Cardiac septum (tissue), 1 donor: ENCODE measurements at regions of chr18 and their contacts with region 1.

Region 1: DNA sequence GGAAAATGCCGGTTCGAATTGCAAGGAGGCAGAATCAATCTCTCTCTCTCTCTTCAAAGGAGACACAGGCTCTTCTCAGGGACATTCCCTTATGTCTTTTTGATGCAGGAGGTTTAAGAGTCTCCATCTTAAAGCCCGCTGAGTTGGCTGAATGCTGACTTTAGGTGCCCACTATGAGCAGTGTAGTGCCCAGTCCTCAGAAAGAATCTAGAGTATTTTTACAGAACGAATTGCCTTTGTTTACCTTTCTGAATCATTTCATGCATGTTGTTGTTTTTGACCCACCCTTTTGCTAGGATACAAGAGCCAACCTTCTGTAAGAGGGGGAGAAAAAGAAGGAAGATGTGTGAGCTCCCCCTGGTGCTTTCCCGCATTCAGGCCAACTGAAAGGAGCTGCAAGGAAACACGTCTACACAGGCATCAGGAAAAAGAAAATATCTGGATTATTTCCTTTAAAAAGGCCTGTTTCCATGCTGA is 193.5 kb upstream of the TCF4 start:
- DNase-seq: no peak

Region 2: DNA sequence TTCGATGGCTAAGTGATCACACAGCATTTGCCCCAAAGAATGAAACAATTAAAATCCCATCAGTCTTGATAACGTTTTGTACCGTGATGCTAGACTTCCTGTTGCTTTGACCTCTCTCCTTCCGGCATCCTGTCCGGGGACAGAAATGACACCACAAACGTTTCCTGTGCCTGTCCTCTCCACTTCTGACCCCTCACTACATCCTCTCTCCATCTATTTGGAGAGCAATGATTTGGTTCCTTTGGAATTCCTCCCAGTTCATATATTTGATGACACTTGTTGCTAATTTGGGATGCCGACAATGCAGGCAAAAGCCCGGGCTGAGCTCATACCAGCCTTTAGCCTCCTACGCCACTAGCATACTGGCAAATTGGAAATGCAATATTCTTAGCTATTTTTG is 671.1 kb before region 1 on chr18:
- intact Hi-C with region 1: loop called (anchors 10 kb)
- DNase-seq: no peak

Region 3: GRCh38 chr18:55275039-55275901 is 506.2 kb before region 1 on chr18:
- intact Hi-C with region 1: no loop called
- DNase-seq: no peak

Region 4: GRCh38 chr18:55322178-55322735 is 459.3 kb before region 1 on chr18:
- intact Hi-C with region 1: loop called (anchors 10 kb)
- DNase-seq: peak; percentile 82

Region 5: GRCh38 chr18:55415258-55415871 is 366.2 kb before region 1 on chr18:
- intact Hi-C with region 1: loop called (anchors 5 kb)
- DNase-seq: peak; percentile 89

Region 6: GRCh38 chr18:55589625-55590291 is 191.8 kb before region 1 on chr18:
- intact Hi-C with region 1: loop called (anchors 1 kb)
- DNase-seq: peak; percentile 97

Region 7: GRCh38 chr18:55861266-55861665 is 79.7 kb after region 1 on chr18:
- intact Hi-C with region 1: loop called (anchors 5 kb)
- DNase-seq: no peak

Region 8: GRCh38 chr18:56575819-56576663 is 794.5 kb after region 1 on chr18:
- intact Hi-C with region 1: loop called (anchors 10 kb)
- DNase-seq: no peak